ENCODE measurements at regions of chr1 and their contacts with region 1.

Region 1: DNA sequence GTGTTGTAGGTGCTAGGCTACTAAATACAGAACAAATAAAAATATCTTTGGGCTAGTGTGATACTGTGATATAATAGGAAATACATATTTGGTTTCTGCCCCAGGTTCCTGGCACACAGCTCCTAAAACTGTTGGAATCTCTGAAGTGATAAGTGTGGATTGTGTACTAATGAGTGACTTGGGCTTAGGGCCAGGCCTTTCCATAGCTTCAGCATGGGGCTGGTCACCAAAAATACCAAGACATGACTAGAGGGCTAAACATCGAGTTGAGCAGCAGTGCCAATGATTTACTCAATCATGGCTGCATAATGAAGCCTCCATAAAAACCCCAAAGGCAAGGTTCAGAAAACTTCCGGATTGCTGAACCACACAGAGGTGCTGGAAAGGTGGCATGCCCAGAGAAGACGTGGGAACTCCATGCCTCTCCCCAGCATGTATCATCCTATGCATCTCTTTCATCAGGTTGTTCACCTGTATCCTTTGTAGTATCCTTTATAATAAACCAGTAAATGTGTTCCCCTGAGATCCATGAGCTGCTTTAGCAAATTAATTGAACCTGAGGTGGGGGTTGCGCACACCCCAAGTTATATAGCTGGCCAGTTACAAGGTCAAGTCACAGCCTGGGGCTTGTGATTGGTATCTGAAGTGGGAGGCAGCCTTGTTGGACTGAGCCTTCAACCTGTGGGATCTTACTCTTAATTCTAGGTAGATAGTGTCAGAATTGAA is 51.6 kb downstream of the ZMYM4 start:
- DNase-seq: no peak
- H3K4me3 ChIP-seq: no peak overlapping the region
- H3K27me3 ChIP-seq: no peaks in the 10 kb centered on the region
- CTCF ChIP-seq: no peak

Region 2: GRCh38 chr1:35220976-35221375 is 99.2 kb before region 1 on chr1:
- CTCF ChIA-PET with region 1: no interaction called
- POLR2A ChIA-PET with region 1: no interaction called
- DNase-seq: no peak
- H3K4me3 ChIP-seq: no peak overlapping the region
- H3K27me3 ChIP-seq: no peaks in the 10 kb centered on the region
- CTCF ChIP-seq: peak; percentile 33; the same call in 1 of the 2 replicates

Region 3: GRCh38 chr1:35298464-35298863 is 21.7 kb before region 1 on chr1:
- CTCF ChIA-PET with region 1: no interaction called
- POLR2A ChIA-PET with region 1: interaction called, 26 read pairs
- DNase-seq: no peak
- H3K4me3 ChIP-seq: no peak overlapping the region
- H3K27me3 ChIP-seq: no peaks in the 10 kb centered on the region
- CTCF ChIP-seq: peak; percentile 46

Region 4: DNA sequence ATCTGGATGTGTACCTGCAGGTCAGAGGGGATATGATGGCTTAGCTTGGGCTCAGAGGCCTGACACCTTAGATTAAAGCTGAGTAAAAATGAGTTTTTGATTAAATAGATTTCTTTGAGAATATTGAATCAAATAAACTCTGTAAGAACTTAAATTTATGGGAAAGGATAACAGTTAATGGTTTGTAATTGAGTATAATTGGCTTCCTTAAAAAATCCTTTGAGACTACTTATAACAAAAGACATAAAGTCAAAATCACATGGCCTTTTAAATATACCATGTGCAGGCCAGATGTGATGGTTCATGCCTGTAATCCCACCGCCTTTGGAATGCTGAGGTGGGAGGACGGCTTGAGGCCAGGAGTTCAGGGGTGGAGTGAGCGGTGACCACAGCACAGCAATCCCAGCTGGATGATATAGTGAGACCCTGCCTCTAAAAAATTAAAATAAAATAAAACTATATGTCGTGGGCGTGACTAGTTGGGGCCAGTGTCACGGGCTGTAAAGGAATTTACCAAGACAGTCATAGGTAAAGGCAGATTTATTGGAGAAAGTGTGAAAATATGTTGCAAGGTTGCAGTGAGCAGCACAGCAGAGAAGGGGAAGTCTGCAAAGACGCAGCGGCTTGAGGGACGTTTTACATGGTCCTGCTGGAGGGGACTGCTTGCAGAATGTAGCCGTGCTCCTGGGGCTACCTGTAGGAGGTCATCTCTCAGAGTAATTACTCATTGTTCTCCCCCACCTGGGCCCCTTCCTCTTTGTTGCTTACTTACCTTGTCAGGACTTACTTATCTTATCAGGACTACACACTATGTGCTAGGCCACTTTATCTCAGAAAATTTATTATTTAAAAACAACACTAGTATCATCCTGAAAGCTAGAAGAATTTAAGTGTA is 70.7 kb after region 1 on chr1:
- CTCF ChIA-PET with region 1: no interaction called
- POLR2A ChIA-PET with region 1: no interaction called
- DNase-seq: no peak
- H3K4me3 ChIP-seq: no peak overlapping the region
- H3K27me3 ChIP-seq: no peaks in the 10 kb centered on the region
- CTCF ChIP-seq: no peak